ENCODE measurements at regions of chr11 and their contacts with region 1.

Region 1: GRCh38 chr11:113896156-113896879 is 8.3 kb upstream of the HTR3B start:
- DNase-seq: no peak
- H3K4me3 ChIP-seq: no peak overlapping the region
- H3K27ac ChIP-seq: no peak overlapping the region
- H3K27me3 ChIP-seq: peaks cover 8% of the 10 kb centered on the region
- CTCF ChIP-seq: peak; percentile 74

Region 2: DNA sequence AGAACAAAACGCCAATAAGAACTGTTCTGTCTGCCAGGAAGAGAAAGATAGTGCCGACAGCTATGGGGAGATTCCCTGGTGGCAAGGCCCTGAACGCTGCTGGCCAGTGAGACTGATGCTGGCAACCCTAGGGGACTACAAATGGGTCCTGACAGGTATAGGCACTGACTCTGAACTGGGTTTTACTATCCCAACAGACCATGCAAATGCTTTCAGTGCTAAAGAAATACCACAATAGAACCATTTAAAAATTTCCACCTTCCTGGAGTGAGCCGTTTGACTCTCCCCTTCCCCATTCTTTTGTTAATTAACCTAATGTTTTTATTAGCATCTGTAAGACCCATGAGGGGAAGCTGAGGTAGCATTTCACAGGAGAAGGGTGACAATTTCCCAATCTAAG is 46.6 kb before region 1 on chr11:
- CTCF ChIA-PET with region 1: no interaction called
- POLR2A ChIA-PET with region 1: no interaction called
- DNase-seq: no peak
- H3K4me3 ChIP-seq: no peak overlapping the region
- H3K27ac ChIP-seq: no peak overlapping the region
- H3K27me3 ChIP-seq: no peaks in the 10 kb centered on the region
- CTCF ChIP-seq: no peak

Region 3: DNA sequence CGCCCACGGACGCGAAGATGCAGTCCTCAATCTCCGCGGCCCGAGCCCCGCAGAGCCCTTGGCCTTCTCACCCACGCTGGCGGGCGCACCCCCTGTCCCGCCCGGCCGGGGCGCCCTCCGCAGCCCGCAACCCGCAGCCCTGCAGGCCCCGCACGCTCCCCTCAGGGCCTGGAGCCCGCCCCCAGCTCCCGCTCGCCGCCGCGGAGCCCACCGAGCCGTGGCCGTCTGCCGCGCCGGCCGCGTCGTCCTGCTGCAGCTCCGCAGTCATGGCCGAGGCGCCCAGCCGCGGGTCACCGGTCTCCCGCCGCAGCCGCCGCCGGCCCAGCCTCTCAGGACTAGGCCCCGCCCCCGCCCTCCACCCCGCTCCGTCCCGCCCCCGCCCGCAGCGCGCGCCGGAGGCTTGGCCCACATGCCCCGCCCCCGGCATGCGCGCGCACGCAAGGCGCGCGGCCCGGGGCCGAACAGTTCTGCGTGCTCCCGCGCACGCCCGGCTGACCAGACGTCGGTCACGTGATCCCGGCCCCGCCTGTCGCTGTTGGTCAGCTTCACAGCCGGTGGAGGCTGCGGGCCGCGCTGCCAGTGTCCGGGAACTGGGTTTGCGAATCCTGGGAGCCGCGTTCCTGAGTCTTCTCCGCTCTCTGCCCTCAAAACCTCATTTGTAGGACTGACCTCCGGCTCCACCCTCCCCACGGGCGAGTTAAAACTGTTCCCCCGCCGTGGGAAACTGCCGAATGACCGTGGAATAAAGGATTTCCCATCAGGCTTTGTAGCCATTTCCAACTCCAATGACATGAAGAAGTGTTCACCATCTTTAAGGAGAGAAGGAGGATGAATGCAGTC is 20.9 kb before region 1 on chr11 and contains the start of gene USP28:
- CTCF ChIA-PET with region 1: interaction called, 8 read pairs
- POLR2A ChIA-PET with region 1: interaction called, 11 read pairs
- DNase-seq: peak; percentile 87
- H3K4me3 ChIP-seq: peak within 1 kb of the TSS; percentile 71
- H3K27ac ChIP-seq: peak within 1 kb of the TSS; percentile 94
- H3K27me3 ChIP-seq: no peaks in the 10 kb centered on the region
- CTCF ChIP-seq: no peak
- polyA plus RNA-seq, gene USP28: 35.6 and 38.7 TPM in 2 replicates

Region 4: DNA sequence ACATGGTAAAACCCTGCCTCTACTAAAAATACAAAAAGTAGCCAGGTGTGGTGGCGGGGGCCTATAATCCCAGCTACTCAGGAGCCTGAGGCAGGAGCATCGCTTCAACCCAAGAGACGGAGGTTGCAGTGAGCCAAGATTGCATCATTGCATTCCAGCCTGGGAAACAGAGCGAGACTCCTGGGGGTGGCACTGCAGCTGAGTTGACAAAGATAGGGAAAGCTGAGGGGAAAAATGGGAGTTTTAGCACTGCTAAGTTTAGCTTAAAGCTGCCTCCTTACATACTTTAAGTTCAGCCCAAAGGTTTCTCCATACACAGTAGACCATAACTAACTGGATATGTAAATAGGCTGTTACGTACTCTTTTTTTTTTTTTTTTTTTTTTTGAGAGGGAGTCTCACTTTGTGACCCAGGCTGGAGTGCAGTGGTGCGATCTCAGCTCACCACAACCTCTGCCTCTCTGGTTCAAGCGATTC is 11.9 kb before region 1 on chr11:
- CTCF ChIA-PET with region 1: interaction called, 16 read pairs
- POLR2A ChIA-PET with region 1: no interaction called
- DNase-seq: no peak
- H3K4me3 ChIP-seq: no peak overlapping the region
- H3K27ac ChIP-seq: no peak overlapping the region
- H3K27me3 ChIP-seq: no peaks in the 10 kb centered on the region
- CTCF ChIP-seq: no peak

Region 5: GRCh38 chr11:113974741-113975470 is 78.6 kb after region 1 on chr11 and contains the start of gene HTR3A:
- CTCF ChIA-PET with region 1: no interaction called
- POLR2A ChIA-PET with region 1: no interaction called
- DNase-seq: no peak
- H3K4me3 ChIP-seq: no peak within 1 kb of the TSS
- H3K27ac ChIP-seq: no peak within 1 kb of the TSS
- H3K27me3 ChIP-seq: no peaks in the 10 kb centered on the region
- CTCF ChIP-seq: no peak
- polyA plus RNA-seq, gene HTR3A: not detected in 2 replicates

Region 6: DNA sequence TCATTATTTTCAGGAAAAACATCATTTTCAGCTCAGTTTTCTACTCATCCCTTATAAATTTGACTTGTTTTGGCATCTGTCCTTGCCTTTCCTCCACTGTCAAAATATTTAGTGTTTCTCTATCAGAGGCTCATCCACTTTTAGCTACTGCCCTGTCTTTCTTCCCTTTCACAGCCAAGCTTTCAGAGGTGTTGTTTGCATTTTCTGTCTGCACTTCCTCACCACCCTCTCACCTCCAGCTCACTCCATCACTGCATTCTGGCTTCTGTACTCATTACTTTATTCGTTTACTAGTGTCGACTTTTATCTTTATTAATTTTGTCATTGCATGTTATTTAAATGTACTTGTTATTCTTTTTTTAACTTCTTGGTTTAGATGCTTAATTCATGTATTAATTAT is 373.2 kb after region 1 on chr11:
- CTCF ChIA-PET with region 1: interaction called, 205 read pairs
- POLR2A ChIA-PET with region 1: no interaction called
- DNase-seq: no peak
- H3K4me3 ChIP-seq: no peak overlapping the region
- H3K27ac ChIP-seq: no peak overlapping the region
- H3K27me3 ChIP-seq: peaks cover 31% of the 10 kb centered on the region
- CTCF ChIP-seq: no peak